ENCODE measurements at regions of chr2 and their contacts with region 1.

Region 1: DNA sequence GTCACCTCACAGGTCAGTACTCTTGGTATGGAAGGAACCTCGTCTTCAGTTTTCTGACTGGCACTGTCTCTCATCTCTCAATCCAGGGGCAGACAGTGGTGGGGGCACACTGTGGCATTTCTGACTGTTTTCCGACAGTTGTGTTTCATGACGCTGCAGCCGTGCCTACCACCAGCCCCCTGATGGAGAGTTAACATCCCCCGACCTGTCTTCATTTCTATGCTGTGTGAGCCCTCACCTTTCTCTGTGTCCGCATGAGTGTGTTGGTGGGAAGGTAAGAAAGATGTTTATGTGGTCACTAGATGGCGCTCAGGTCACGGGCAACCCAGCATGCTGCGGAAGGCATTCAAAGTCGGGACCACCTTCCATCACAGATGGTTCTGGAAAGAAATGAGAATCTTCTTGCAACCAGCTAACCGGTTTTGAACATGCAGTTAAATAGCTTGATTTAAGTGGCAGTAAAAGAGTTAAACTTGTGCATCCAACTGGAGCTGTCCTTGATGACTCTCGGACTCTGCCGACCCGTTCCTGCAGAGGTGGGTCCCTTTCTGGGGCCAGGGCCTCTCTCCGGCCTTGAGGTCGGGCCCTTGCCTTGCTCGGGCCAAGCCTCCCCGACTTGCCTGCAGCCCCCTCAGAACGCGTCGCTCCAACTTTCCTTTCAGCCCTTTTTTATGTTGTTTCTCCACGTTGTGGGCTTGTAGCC is 92.4 kb downstream of the DYSF start:
- DNase-seq: peak; percentile 58 to 78
- ATAC-seq: peak; percentile 62
- H3K4me3 ChIP-seq: no peak overlapping the region
- H3K27ac ChIP-seq: no peak overlapping the region
- H3K4me1 ChIP-seq: no peaks in the 10 kb centered on the region
- H3K27me3 ChIP-seq: no peaks in the 10 kb centered on the region

Region 2: GRCh38 chr2:71603311-71603811 is 57.6 kb after region 1 on chr2:
- intact Hi-C with region 1: loop called in 1 of 2 experiments (anchors 5 kb)
- DNase-seq: peak; percentile 49 to 78
- ATAC-seq: no peak
- H3K4me3 ChIP-seq: no peak overlapping the region
- H3K27ac ChIP-seq: no peak overlapping the region
- H3K4me1 ChIP-seq: no peaks in the 10 kb centered on the region
- H3K27me3 ChIP-seq: no peaks in the 10 kb centered on the region

Region 3: DNA sequence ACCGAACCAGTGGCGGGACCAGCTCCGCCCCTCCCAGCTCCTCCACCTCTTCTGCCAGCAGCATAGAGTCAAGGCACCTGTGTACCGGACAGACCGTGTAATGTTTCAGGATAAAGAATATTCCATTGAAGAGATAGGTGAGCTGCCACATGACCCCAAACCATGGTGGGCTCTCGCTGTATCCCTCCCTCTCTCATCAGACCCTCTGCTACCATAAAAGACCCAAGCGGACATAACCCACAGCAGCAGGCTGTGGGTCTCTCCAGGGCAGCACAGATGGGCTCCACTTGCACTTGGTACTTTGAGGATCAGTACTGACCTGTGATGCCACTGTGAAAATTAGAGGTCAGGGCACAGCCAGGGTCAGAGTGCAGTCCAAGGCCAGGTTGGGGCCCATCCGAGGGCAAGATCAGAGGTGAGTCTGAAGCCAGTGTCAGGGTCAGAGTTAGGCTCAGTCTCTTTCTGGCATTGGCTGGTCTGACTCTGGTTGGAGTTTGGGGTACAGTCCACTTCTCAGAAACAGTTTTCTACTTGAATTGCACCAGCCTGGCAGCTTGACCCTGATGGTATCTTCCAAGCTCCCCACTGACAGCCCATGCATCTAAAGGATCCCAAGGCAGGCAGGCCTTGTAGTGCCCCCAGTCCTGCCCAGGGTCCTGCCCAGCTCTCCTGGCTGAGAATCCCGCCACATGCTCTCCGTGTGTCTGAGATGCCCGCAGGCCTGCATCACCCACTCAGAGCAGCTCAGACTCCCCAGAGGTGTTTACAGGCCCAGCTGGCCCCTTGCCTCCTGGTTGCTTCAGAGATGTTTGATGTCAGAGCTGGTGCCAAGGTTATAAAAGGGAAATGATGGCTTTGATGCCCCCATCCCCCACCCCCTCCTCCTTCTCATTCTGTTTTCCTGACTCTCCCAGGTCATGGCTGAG is 119.7 kb after region 1 on chr2:
- intact Hi-C with region 1: no loop called
- DNase-seq: peak in 1 of 2 donors; percentile 39
- ATAC-seq: no peak
- H3K4me3 ChIP-seq: no peak overlapping the region
- H3K27ac ChIP-seq: no peak overlapping the region
- H3K4me1 ChIP-seq: no peaks in the 10 kb centered on the region
- H3K27me3 ChIP-seq: no peaks in the 10 kb centered on the region

Region 4: GRCh38 chr2:71691747-71692501 is 146.2 kb after region 1 on chr2:
- intact Hi-C with region 1: loop called in 1 of 2 experiments (anchors 10 kb)
- DNase-seq: peak; percentile 46 to 81
- ATAC-seq: peak; percentile 57
- H3K4me3 ChIP-seq: no peak overlapping the region
- H3K27ac ChIP-seq: no peak overlapping the region
- H3K4me1 ChIP-seq: no peaks in the 10 kb centered on the region
- H3K27me3 ChIP-seq: no peaks in the 10 kb centered on the region

Region 5: GRCh38 chr2:71923887-71924533 is 378.3 kb after region 1 on chr2:
- intact Hi-C with region 1: loop called in 1 of 2 experiments (anchors 10 kb)
- DNase-seq: peak in 1 of 2 donors; percentile 71
- ATAC-seq: peak; percentile 82
- H3K4me3 ChIP-seq: no peak overlapping the region
- H3K27ac ChIP-seq: no peak overlapping the region
- H3K4me1 ChIP-seq: no peaks in the 10 kb centered on the region
- H3K27me3 ChIP-seq: no peaks in the 10 kb centered on the region

Region 6: DNA sequence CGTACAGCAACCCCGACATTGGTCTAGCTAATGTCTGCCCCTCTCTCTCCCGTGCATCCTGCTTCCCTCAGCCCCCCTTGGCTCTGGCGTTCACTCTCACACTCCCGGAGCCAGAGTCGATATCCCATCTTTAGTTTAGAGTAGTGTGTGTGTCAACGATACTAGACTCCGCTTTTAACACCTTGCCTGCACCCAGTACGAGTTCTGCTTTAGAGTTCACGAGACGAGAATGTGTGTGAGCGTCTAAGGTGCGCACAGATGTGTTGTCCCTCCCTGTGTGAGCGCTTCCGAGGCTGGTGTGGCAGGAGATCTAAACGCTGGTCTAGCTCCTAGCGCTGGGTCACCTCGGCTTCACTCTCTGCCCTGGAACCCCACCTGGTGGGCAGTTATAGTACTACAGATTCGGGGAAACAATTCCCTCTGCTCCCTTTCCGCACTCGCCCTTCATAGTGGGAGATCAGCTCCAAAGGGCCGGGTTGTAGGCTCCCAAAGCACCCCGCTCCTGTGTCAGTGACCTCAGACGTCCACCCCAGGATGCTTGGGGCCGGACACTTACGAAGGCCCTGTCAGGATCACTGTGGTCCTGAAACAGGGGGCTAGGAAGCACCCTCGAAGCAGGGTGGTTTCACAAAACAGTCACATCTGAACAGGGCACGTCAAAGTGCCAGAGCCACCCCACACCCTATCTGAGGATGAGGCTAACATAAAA is 604.6 kb after region 1 on chr2:
- intact Hi-C with region 1: loop called (anchors 2 to 5 kb)
- DNase-seq: peak; percentile 74 to 88
- ATAC-seq: peak; percentile 89
- H3K4me3 ChIP-seq: no peak overlapping the region
- H3K27ac ChIP-seq: no peak overlapping the region
- H3K4me1 ChIP-seq: no peaks in the 10 kb centered on the region
- H3K27me3 ChIP-seq: no peaks in the 10 kb centered on the region

Measured in aorta (tissue), 5 donors.